Panc1 (cell line): ENCODE measurements at regions of chr7 and their contacts with region 1.

Region 1: GRCh38 chr7:23055582-23056178 is 41.8 kb upstream of the HYCC1 start:
- DNase-seq: peak; percentile 61
- ATAC-seq: peak; percentile 92
- H3K4me3 ChIP-seq: no peak overlapping the region
- H3K27ac ChIP-seq: no peak overlapping the region
- H3K4me1 ChIP-seq: no peaks in the 10 kb centered on the region
- H3K27me3 ChIP-seq: no peaks in the 10 kb centered on the region
- CTCF ChIP-seq: peak; percentile 93; the same call in 1 of the 2 replicates

Region 2: GRCh38 chr7:22732556-22733126 is 323.0 kb before region 1 on chr7:
- CTCF ChIA-PET with region 1: no interaction called
- POLR2A ChIA-PET with region 1: no interaction called
- in situ Hi-C with region 1: no loop called
- intact Hi-C with region 1: loop called (anchors 5 kb)
- DNase-seq: no peak
- ATAC-seq: peak; percentile 75
- H3K4me3 ChIP-seq: no peak overlapping the region
- H3K27ac ChIP-seq: no peak overlapping the region
- H3K4me1 ChIP-seq: peaks cover 5% of the 10 kb centered on the region; the same call in 1 of the 2 replicates
- H3K27me3 ChIP-seq: no peaks in the 10 kb centered on the region
- CTCF ChIP-seq: peak; percentile 61

Region 3: DNA sequence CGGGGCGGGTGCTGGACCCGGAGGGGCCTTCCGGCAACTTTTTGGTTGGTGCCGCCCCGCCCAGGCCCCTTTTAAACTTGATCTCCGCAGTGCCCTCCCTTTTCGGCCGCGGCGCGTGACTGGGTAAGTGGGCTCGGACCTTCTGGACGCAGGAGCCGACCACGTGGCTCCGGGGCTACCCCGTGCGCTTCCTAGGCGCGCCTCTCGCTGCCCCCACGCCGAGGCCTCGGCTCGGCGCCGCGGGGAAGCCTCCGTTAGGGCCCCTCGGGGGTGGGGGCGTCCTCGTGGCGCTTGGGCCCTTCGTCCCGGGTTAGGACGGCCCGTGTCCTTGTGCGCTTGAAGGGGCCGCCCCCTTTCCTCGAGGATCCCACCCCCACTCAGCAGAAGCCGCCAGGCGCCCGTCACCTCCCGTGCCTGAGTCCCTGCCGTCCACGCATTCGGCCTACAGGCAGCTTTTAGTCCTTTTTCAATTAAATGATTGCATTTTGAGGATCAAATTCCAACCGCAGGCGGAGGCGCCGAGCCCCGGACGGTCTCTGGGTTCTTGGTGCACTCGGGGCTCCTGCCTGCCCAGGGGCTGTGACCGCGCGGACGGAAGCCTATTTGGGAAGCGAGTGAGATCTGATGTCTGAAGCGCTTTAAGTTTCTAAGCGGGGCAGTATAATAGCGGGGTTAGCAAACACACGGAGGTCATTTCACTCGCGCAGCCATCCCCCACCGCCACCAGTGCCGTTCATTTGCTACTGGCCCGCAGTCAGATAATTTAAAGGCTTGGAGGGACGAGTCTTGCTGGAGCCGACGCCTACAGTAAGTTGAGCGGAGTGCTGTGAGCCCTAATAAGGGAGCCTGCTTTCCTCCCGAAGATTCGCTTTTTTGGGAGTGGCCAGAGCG is 201.3 kb before region 1 on chr7:
- CTCF ChIA-PET with region 1: no interaction called
- POLR2A ChIA-PET with region 1: no interaction called
- in situ Hi-C with region 1: no loop called
- intact Hi-C with region 1: loop called (anchors 2 kb)
- DNase-seq: no peak
- ATAC-seq: peak; percentile 90
- H3K4me3 ChIP-seq: peak overlapping the region; percentile 86 to 97
- H3K27ac ChIP-seq: peak overlapping the region; percentile 98
- H3K4me1 ChIP-seq: peaks cover 36% of the 10 kb centered on the region
- H3K27me3 ChIP-seq: no peaks in the 10 kb centered on the region
- CTCF ChIP-seq: no peak; the same call in none of the 2 replicates

Region 4: DNA sequence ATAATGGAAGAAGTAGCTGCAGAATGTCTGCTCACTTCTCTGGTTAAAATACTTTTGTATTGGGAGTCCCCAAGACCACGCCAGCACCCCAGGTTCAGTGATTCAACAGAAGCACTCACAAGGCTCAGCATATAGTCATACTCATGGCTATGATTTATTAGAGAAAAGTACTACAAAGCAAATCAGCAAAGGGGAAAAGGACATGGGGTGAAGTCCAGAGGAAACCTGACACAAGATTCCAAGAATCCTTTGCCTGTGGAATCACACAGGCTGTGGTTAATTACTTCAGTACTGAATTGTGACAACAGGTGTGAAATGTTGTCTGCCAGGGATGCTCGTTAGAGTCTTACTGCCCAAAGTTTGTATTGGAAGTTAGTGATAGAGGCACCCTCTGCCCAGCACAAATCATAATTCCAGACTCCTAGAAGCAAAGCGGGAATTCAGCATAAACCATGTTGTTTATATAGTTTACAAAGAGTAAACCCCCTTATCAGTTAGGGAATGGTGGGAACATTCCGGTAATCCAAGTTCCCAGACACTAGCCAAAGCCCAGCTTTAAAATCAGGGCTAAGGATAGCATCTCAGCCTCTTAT is 121.1 kb before region 1 on chr7:
- CTCF ChIA-PET with region 1: interaction called, 3 read pairs
- POLR2A ChIA-PET with region 1: no interaction called
- in situ Hi-C with region 1: no loop called
- intact Hi-C with region 1: loop called (anchors 5 kb)
- DNase-seq: no peak
- ATAC-seq: no peak
- H3K4me3 ChIP-seq: no peak overlapping the region
- H3K27ac ChIP-seq: no peak overlapping the region
- H3K4me1 ChIP-seq: no peaks in the 10 kb centered on the region
- H3K27me3 ChIP-seq: no peaks in the 10 kb centered on the region
- CTCF ChIP-seq: no peak